Activated T-helper 1 cell treated with anti-CD3 and anti-CD28 coated beads, Interleukin-12 subunit alpha, Interleukin-12 subunit beta, Interleukin-2, Interleukin-4 antibody, amounts not matched to agents 30 ng/mL and 10 ng/mL and 1 ng/mL, durations not matched to agents 14 hours and 24 hours and 36 hours (primary cell): ENCODE measurements at regions of chr1 and their contacts with region 1.

Region 1: DNA sequence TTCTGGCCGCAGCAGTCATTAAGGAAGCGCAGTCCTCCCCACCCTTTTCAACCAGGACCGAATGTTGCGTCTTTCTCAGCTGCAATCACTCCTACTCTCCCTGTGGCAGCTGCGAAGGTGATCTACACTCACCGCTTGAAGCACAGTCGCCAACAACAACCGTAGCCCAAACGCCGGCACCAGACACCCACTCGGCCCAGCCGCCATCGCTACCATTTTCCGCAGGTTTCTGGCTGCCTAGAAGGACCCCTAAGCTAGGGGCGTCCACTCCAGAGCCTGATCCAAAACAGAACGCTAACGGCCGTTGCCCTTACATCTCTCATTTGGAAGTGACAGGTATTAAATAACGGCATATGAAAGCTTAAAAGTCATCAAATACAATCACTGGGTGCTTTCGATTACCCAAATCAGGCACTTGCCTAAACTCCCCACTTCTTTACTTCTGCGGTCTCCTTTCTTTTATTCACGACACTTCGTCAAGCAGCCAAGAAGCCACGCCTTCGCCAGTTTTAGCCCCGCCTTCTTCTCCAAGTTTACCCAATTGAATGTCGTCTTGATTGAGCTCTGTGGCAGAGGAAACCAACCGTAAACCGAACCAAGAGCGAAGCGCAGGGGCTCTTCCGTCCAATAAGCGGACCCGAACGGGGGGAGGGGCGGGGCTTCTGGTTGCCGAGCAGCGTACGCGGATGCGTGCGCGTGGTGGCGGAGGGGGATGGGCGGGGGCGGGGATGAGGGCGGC is at the start of gene SELENOF:
- DNase-seq: peak; percentile 98
- H3K4me3 Mint-ChIP-seq: no peak within 1 kb of the TSS
- H3K27ac Mint-ChIP-seq: no peak within 1 kb of the TSS
- H3K4me1 Mint-ChIP-seq: peaks cover 38% of the 10 kb centered on the region
- H3K27me3 Mint-ChIP-seq: no peaks in the 10 kb centered on the region
- total RNA-seq, gene SELENOF: 174 and 198 TPM in 2 replicates

Region 2: DNA sequence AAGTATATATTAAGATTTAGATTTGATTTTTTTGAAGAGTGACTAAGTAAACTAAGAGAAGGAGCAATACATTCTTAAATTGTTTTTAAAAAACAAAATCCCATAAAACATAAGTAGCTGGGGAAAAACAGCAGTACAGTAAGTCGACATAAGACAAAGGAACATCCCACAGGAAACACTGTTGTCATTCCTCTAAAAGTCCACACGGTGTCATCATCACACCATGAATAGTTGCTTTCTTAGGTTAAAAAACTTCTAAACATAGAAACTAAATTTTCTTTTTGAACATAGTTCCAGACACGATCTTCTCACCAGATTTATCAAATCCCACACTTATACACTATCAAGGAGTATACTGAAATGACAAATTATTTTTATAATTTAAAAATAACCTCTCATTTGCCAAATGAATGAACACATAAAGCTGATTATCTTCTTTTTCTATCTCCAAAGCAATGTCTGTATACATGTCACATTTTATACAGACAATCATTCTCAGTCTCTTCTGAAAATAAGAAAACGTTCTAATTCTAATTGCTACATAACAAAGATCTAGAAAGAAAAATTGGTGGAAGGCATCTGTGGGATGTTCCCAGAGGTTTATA is 533.7 kb before region 1 on chr1:
- intact Hi-C with region 1: loop called (anchors 5 kb)
- DNase-seq: no peak
- H3K4me3 Mint-ChIP-seq: no peak overlapping the region
- H3K27ac Mint-ChIP-seq: no peak overlapping the region
- H3K4me1 Mint-ChIP-seq: peaks cover 22% of the 10 kb centered on the region
- H3K27me3 Mint-ChIP-seq: no peaks in the 10 kb centered on the region

Region 3: DNA sequence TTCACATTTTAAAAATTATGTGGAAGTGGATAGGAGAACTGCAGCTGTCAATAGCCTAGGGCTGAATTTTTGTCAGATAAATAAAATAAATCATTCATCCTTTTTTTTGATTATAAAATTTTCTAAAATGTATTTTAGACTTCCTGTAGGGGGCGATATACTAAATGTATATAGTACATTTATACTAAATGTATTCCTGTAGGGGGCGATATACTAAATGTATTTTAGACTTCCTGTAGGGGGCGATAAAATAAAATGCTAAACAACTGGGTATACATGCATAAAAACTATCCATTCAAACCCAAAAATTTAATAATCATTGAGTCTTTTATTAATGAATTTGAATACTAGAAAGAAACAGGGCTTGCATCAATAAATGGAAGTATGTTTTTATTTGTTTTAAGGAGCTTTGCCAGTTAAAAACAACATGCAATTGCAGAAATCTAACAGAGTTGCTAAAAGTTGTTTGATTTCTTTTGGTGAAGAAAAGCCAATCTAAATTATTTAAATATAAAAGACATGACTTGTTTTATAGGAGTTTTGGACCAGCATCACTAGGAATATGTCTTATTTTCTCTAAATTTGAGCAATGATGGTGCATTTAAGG is 414.0 kb before region 1 on chr1:
- intact Hi-C with region 1: loop called (anchors 5 kb)
- DNase-seq: no peak
- H3K4me3 Mint-ChIP-seq: no peak overlapping the region
- H3K27ac Mint-ChIP-seq: no peak overlapping the region
- H3K4me1 Mint-ChIP-seq: peaks cover 16% of the 10 kb centered on the region
- H3K27me3 Mint-ChIP-seq: peaks cover 38% of the 10 kb centered on the region

Region 4: DNA sequence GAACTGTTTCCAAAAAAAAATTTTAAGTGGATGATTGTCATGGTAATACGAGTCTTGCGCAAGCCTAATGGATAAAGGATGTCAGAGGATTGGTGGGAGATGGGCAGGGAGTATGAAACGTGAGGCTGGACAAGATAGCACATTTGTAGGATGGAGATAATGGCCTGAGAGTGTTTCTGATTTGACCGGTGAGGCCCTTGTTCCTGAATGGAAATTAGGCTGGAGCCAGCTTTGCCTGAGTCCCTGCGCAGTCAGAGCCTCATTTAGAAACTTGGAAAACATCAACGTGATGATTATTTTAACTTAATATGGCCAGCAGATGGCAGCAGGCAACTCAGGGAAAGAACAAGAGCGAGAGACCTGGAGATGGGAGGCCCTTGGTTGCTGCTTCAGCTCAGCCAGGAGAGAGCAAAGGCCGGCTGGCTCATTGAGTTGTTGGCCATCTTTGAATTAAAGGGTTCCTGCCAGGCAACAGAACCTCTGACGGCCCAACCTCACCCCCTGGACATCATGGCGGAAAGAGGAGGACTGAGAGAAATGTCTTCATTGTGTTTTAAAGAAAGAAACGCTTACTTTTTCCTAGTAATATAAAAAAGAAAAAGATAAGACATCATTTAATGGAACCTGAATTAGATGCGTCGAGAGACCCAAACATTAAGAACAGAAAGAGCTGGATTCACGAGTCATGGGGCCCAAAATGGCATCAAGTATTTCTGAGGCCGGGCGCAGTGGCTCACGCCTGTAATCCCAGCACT is 80.4 kb before region 1 on chr1:
- intact Hi-C with region 1: loop called (anchors 1 kb)
- DNase-seq: peak; percentile 24
- H3K4me3 Mint-ChIP-seq: no peak overlapping the region
- H3K27ac Mint-ChIP-seq: no peak overlapping the region
- H3K4me1 Mint-ChIP-seq: peaks cover 6% of the 10 kb centered on the region
- H3K27me3 Mint-ChIP-seq: peaks cover 5% of the 10 kb centered on the region

Region 5: DNA sequence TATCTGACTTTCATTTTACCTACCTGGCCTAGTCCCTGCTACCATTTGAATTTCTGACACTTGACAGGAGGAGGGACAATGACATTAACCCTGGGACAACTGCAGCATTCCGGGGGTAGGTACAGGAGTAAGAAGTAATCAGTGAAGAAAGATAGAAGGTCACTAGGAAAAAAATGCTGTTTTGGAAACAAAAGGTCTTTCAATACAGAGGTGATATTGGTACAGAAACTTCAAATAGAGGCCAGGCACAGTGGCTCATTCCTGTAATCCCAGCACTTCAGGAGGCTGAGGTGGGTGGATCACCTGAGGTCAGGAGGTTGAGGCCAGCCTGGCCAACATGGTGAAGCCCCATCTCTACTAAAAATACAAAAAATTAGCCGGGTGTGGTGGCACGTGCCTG is 68.6 kb before region 1 on chr1:
- intact Hi-C with region 1: no loop called
- DNase-seq: no peak
- H3K4me3 Mint-ChIP-seq: no peak overlapping the region
- H3K27ac Mint-ChIP-seq: no peak overlapping the region
- H3K4me1 Mint-ChIP-seq: no peaks in the 10 kb centered on the region
- H3K27me3 Mint-ChIP-seq: peaks cover 3% of the 10 kb centered on the region

Region 6: DNA sequence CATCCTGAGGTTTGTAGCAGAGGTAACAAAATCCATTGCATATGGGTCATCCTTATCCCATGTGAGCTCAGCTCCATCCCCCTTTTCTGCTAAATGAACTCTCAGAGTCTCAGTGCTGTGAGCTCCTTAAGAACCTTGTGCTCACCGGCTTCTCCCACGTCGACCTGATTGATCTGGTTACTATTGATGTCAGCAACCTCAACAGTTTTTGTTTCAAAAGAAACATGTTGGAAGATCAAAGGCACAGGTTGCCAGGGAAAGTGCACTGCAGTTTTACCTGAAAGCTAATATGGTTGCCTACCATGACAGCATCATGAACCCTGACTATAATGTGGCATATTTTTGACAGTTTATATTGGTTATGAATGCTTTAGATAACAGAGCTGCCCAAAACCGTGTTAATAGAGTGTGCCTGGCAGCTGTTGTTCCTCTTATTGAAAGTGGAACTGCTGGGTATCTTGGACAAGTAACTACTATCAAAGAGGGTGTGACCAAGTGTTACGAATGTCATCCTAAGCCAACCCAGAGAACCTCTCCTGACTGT is 131.8 kb after region 1 on chr1:
- intact Hi-C with region 1: loop called (anchors 1 kb)
- DNase-seq: peak; percentile 47
- H3K4me3 Mint-ChIP-seq: peak overlapping the region; percentile 47
- H3K27ac Mint-ChIP-seq: peak overlapping the region; percentile 91
- H3K4me1 Mint-ChIP-seq: peaks cover 22% of the 10 kb centered on the region
- H3K27me3 Mint-ChIP-seq: no peaks in the 10 kb centered on the region

Region 7: GRCh38 chr1:87151500-87152421 is 237.7 kb after region 1 on chr1:
- intact Hi-C with region 1: loop called (anchors 5 kb)
- DNase-seq: peak; percentile 5
- H3K4me3 Mint-ChIP-seq: peak overlapping the region; percentile 65
- H3K27ac Mint-ChIP-seq: peak overlapping the region; percentile 25
- H3K4me1 Mint-ChIP-seq: peaks cover 18% of the 10 kb centered on the region
- H3K27me3 Mint-ChIP-seq: peaks cover 40% of the 10 kb centered on the region

Region 8: GRCh38 chr1:88891318-88891950 is 1977.4 kb after region 1 on chr1 and contains the start of gene GTF2B:
- intact Hi-C with region 1: loop called (anchors 2 kb)
- DNase-seq: peak; percentile 92
- H3K4me3 Mint-ChIP-seq: peak within 1 kb of the TSS; percentile 92
- H3K27ac Mint-ChIP-seq: peak within 1 kb of the TSS; percentile 95
- H3K4me1 Mint-ChIP-seq: peaks cover 49% of the 10 kb centered on the region
- H3K27me3 Mint-ChIP-seq: no peaks in the 10 kb centered on the region
- total RNA-seq, gene GTF2B: 45.5 and 49.1 TPM in 2 replicates